ENCODE measurements at regions of chr3 and their contacts with region 1.

Region 1: GRCh38 chr3:53238051-53238720 is 17.6 kb downstream of the TKT start:
- DNase-seq: peak; percentile 82
- H3K4me3 Mint-ChIP-seq: peak overlapping the region; percentile 60
- H3K27ac Mint-ChIP-seq: peak overlapping the region; percentile 91
- H3K4me1 Mint-ChIP-seq: peaks cover 50% of the 10 kb centered on the region
- H3K27me3 Mint-ChIP-seq: no peaks in the 10 kb centered on the region
- CTCF ChIP-seq: no peak

Region 2: DNA sequence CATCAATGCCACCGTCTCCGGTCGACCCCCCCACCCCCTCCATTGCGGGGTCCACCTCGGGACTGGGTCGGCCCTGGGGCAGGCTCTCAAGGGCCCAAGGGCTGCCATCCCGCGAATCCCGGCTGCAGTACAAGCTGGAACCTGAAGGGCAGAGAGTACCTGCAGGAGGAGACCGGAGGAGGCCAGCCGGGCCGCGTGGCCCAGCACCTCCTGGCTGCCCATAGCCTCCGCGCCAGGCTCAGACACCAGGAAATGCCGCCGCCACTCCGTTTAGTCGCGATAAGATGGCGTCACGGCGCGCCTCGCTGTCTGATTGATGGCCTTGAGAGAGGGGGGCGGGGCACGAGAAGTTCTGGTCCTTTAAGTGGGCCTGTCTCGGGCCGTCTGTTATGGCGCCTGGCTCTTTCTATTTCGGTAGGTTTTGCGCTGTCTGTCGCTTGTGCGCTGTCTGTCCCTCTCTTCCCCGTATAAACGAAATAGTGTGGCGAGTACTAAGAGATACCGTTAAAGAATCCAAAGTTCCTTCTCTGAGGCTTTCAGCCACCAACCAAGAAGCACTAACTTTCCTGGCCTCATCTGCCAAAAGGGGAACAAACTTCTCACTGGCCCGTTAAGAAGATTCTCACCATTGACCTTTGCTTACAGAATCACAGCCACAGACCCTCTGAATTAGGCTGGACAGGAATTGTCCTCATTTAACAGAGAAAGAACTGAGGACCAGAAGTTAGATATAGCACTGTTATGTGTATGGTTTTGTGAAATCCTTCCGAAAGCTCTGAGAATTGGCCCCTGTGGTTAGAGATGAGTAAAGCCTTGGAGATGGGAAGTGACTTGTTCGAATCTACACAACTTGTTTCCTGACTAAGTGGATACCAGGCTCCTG is 107.8 kb before region 1 on chr3 and contains the start of gene RFT1:
- CTCF ChIA-PET with region 1: no interaction called
- intact Hi-C with region 1: no loop called
- DNase-seq: peak; percentile 95
- H3K4me3 Mint-ChIP-seq: peak within 1 kb of the TSS; percentile 83
- H3K27ac Mint-ChIP-seq: peak within 1 kb of the TSS; percentile 38
- H3K4me1 Mint-ChIP-seq: peaks cover 10% of the 10 kb centered on the region
- H3K27me3 Mint-ChIP-seq: no peaks in the 10 kb centered on the region
- CTCF ChIP-seq: no peak
- total RNA-seq, gene RFT1: 30.5 and 35.0 TPM in 2 replicates

Region 3: GRCh38 chr3:53255775-53256703 is 17.9 kb after region 1 on chr3 and contains the start of gene TKT:
- CTCF ChIA-PET with region 1: interaction called, 3 read pairs
- intact Hi-C with region 1: loop called (anchors 2 kb)
- DNase-seq: peak; percentile 86
- H3K4me3 Mint-ChIP-seq: peak within 1 kb of the TSS; percentile 87
- H3K27ac Mint-ChIP-seq: peak within 1 kb of the TSS; percentile 68
- H3K4me1 Mint-ChIP-seq: peaks cover 31% of the 10 kb centered on the region
- H3K27me3 Mint-ChIP-seq: no peaks in the 10 kb centered on the region
- CTCF ChIP-seq: no peak
- total RNA-seq, gene TKT: 391 and 446 TPM in 2 replicates

Region 4: DNA sequence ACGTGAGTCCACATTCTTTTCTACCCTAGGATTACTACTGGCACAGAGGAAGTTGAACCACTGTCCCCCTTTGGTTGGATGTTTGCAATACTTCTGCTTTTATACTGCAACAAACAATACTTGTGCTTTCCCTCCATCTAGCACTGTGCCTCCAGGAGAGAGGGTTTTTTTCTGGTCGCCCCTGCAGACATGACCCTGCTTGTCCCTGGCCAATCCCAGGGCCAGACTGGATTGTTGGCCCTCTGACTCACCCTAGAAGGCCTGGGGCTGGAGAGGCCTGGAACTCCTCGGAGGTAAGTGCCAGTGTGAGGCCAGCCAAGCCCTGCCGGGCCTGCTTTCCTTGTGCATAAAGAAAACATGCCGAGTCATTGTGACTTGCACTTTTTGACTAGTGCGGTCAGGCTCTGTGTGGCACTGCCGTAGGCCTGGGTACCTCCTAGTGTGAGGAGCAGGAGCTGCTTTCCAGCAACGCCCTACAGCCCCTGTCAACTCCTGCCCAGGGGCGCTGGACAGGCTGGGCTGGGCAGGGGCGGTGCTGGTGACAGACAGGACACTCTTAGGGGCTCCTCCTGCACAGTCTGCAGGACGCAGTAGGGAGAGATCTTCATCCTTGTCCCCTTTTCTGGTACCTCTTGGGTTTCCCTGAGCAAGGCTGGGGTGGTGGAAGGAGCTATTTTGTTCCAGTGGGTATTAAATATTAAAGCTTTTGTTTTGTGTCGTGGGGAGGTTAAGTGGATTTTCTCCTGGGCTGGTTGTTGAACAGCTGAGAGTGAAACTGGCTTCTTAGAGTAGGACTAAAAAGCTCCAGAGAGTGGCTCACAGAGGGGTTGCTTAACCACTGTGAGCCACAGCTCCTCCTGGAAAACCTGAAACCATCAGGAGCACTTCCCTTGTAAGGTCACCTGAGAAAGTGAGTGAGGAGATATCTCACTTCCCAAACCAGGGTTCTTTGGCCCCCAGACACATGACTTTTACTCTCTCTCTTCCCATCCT is 32.0 kb after region 1 on chr3:
- CTCF ChIA-PET with region 1: interaction called, 7 read pairs
- intact Hi-C with region 1: loop called (anchors 2 kb)
- DNase-seq: peak; percentile 94
- H3K4me3 Mint-ChIP-seq: peak overlapping the region; percentile 57
- H3K27ac Mint-ChIP-seq: peak overlapping the region; percentile 98
- H3K4me1 Mint-ChIP-seq: peaks cover 29% of the 10 kb centered on the region
- H3K27me3 Mint-ChIP-seq: no peaks in the 10 kb centered on the region
- CTCF ChIP-seq: no peak

Region 5: GRCh38 chr3:53382106-53382505 is 143.9 kb after region 1 on chr3:
- CTCF ChIA-PET with region 1: no interaction called
- intact Hi-C with region 1: no loop called
- DNase-seq: no peak
- H3K4me3 Mint-ChIP-seq: no peak overlapping the region
- H3K27ac Mint-ChIP-seq: no peak overlapping the region
- H3K4me1 Mint-ChIP-seq: no peaks in the 10 kb centered on the region
- H3K27me3 Mint-ChIP-seq: no peaks in the 10 kb centered on the region
- CTCF ChIP-seq: no peak

Measured in Calu3 (cell line).